PC-9 (cell line): ENCODE measurements at regions of chr21 and their contacts with region 1.

Region 1: GRCh38 chr21:19507682-19508260 is 1104.2 kb upstream of the TMPRSS15 start:
- DNase-seq: no peak
- H3K4me3 ChIP-seq: no peak overlapping the region
- H3K27ac ChIP-seq: no peak overlapping the region
- H3K4me1 ChIP-seq: no peaks in the 10 kb centered on the region
- H3K27me3 ChIP-seq: no peaks in the 10 kb centered on the region
- CTCF ChIP-seq: peak; percentile 55

Region 2: GRCh38 chr21:19458295-19458694 is 49.5 kb before region 1 on chr21:
- CTCF ChIA-PET with region 1: no interaction called
- POLR2A ChIA-PET with region 1: no interaction called
- intact Hi-C with region 1: no loop called
- DNase-seq: no peak
- H3K4me3 ChIP-seq: no peak overlapping the region
- H3K27ac ChIP-seq: no peak overlapping the region
- H3K4me1 ChIP-seq: no peaks in the 10 kb centered on the region
- H3K27me3 ChIP-seq: no peaks in the 10 kb centered on the region
- CTCF ChIP-seq: no peak

Region 3: GRCh38 chr21:20882462-20883407 is 1375.0 kb after region 1 on chr21:
- CTCF ChIA-PET with region 1: no interaction called
- POLR2A ChIA-PET with region 1: no interaction called
- intact Hi-C with region 1: loop called (anchors 5 kb)
- DNase-seq: peak in 1 of 2 experiments; percentile 15
- H3K4me3 ChIP-seq: no peak overlapping the region
- H3K27ac ChIP-seq: no peak overlapping the region
- H3K4me1 ChIP-seq: no peaks in the 10 kb centered on the region
- H3K27me3 ChIP-seq: no peaks in the 10 kb centered on the region
- CTCF ChIP-seq: peak; percentile 74